PC-9 (cell line): ENCODE measurements at regions of chr3 and their contacts with region 1.

Region 1: DNA sequence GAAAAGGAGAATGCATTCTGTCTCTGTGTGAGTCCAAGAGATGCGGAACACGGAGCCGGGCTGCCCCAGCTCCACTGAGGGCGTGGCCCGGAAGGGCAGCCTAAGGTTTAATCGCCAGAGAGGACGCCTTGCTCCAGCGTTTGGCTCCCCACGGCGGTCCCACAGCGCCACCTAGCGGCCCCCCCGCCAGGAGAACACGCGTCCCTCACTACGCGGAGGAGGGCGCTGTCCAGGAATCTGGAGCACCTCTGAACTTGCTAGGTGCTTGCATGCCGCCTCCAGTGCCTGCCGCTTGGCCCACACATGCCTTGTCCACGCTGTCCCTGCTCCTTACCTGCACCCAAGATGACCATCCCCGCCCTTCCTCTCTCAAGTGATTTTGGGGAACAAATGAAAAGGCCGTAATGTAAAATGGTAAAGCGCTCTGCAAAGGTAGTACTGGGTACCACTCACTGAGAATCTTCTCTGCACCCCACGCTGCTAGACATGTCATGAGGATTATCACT is 14.4 kb upstream of the MRPS22 start:
- DNase-seq: peak; percentile 72 to 94
- H3K4me3 ChIP-seq: no peak overlapping the region
- H3K27ac ChIP-seq: no peak overlapping the region
- H3K4me1 ChIP-seq: 0 out of 2 replicates have a peak, but pooled peaks cover 3% of the 10 kb centered on the region
- H3K27me3 ChIP-seq: peaks cover 10% of the 10 kb centered on the region
- CTCF ChIP-seq: peak; percentile 97

Region 2: DNA sequence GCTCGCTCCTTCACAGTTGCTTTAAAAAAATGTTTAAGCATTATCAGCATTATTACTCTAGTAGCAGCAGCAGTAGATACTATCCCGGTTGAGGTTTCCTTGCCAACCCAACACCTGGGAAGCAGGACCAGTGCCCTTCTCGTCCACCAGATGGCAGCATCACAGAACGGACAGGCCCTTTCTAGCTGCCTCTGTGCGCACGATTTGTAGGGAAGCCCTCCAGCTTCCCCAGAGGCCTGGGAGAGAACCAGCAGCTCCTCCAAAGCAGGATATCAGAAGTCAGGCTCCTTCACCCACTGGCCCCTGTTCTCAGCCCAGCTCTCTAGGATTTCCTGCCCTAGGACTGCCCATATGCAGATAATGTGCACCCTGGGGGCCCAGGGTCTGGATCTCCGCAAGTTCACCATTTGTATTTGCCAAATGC is 911.8 kb before region 1 on chr3:
- CTCF ChIA-PET with region 1: interaction called, 3 read pairs
- POLR2A ChIA-PET with region 1: no interaction called
- intact Hi-C with region 1: loop called (anchors 1 kb)
- DNase-seq: peak; percentile 54 to 83
- H3K4me3 ChIP-seq: no peak overlapping the region
- H3K27ac ChIP-seq: no peak overlapping the region
- H3K4me1 ChIP-seq: no peaks in the 10 kb centered on the region
- H3K27me3 ChIP-seq: no peaks in the 10 kb centered on the region
- CTCF ChIP-seq: peak; percentile 88

Region 3: DNA sequence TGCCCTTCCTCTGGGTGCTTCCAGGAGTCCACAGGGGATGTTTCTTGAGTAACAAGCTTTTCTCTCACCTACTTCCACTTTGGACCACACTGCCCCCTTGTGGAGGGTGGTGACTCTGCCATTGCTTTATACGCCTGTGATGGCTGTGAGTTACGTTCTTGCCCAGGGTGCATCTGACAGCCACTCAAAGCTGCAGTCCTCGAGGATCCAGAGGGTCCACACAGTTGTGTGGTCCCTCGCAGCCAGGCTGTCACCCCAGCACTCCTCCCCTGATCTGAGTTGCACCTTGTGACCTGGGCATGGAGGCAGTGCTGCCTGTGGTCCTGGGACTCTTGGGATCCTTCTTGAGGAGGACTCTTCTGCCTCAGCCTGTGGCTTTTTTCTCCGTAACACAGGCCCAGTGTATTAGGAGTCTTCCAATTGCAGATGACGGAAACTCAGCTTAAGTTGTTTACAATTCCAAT is 405.8 kb before region 1 on chr3:
- CTCF ChIA-PET with region 1: no interaction called
- POLR2A ChIA-PET with region 1: no interaction called
- intact Hi-C with region 1: loop called (anchors 1 kb)
- DNase-seq: peak; percentile 67 to 85
- H3K4me3 ChIP-seq: no peak overlapping the region
- H3K27ac ChIP-seq: no peak overlapping the region
- H3K4me1 ChIP-seq: peaks cover 30% of the 10 kb centered on the region
- H3K27me3 ChIP-seq: no peaks in the 10 kb centered on the region
- CTCF ChIP-seq: peak; percentile 92

Region 4: DNA sequence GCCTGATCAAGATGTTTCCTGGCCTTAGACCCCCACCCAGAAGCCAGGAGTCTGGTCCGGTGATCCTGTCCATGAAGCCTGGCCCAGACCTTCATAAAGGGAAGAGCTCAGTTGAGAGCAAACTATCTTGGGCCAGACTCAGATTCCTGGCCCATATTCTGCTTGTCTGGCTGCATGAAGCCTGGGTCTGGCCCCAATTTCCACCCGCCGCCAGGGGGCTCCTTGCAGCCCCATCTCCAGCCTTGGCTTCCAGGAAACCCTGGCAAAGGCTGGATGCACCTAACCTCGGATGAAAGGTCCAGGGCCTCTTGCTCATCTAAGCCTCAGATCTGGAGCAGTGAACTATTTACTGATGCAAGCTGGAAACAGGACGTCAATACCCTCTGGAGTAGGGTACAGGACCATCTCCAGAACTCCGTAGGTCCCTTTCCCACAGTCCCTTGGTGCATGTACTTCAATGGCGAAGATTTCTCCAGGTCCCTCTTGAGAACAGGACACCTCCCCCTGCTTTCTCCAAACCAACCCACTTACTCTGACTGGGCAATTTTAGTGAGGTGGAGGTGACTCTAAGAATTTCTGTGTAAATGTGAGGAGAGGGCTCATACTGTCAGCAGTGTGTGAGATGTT is 388.0 kb before region 1 on chr3:
- CTCF ChIA-PET with region 1: no interaction called
- POLR2A ChIA-PET with region 1: no interaction called
- intact Hi-C with region 1: loop called (anchors 1 kb)
- DNase-seq: peak; percentile 40 to 55
- H3K4me3 ChIP-seq: no peak overlapping the region
- H3K27ac ChIP-seq: no peak overlapping the region
- H3K4me1 ChIP-seq: no peaks in the 10 kb centered on the region
- H3K27me3 ChIP-seq: no peaks in the 10 kb centered on the region
- CTCF ChIP-seq: peak; percentile 68

Region 5: GRCh38 chr3:139202226-139202958 is 127.0 kb before region 1 on chr3:
- CTCF ChIA-PET with region 1: no interaction called
- POLR2A ChIA-PET with region 1: no interaction called
- intact Hi-C with region 1: loop called (anchors 1 kb)
- DNase-seq: peak; percentile 59 to 72
- H3K4me3 ChIP-seq: no peak overlapping the region
- H3K27ac ChIP-seq: no peak overlapping the region
- H3K4me1 ChIP-seq: no peaks in the 10 kb centered on the region
- H3K27me3 ChIP-seq: no peaks in the 10 kb centered on the region
- CTCF ChIP-seq: no peak

Region 6: DNA sequence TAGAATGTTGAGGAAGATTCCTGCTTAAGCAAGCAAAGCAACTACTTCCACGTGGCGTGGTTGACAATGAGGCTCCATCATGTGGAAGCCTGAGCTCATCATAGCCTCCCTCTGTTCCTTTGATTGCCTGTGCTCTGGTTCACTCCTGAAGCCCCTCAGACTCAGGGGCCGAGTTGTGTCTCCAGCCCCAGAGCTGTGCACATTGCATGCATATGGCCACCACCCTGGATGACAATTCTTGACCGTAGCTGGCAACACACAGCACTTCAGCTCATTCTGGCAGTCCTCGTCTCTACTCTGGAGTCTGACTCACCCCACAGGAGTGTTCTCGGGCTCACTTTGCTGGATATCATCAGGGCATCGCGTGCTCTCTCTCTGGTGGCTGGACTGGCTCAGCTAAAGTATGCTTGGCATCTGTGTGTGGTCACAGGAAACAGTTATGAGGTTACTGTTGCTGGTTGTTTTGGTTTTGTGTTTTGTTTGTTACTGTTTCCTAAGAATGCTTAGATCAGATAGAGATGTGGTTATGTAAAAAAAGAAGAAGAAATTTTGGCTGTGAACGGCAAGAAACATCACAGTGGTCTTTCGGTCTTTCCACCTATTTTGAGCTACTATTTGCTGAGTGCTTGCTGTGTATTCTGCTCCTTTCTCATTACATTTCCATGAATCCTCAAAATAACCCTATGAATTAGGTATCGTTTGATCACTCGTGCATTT is 27.2 kb before region 1 on chr3:
- CTCF ChIA-PET with region 1: no interaction called
- POLR2A ChIA-PET with region 1: no interaction called
- intact Hi-C with region 1: loop called (anchors 1 kb)
- DNase-seq: peak; percentile 91 to 97
- H3K4me3 ChIP-seq: peak overlapping the region; percentile 22; the same call in 1 of the 2 replicates
- H3K27ac ChIP-seq: peak overlapping the region; percentile 71
- H3K4me1 ChIP-seq: peaks cover 52% of the 10 kb centered on the region
- H3K27me3 ChIP-seq: no peaks in the 10 kb centered on the region
- CTCF ChIP-seq: no peak

Region 7: DNA sequence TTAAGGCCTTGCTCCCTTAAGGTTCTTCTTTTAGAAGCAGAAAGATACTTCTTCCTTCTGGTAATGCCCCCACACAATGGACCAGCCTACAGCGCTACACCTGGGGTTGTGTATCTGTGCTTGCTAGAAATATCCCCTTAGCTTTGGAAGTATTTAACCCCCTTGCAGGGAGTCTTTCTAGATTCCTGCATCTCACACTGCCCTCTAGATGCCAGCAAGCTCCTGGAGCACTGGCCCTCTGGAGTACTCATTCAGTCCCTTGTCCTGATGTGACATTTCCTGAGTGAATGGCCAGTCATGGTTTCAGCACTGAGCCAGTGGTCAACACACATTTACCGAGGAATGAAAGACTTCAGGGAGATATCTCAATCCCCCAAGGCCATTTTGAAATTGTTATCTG is 177.4 kb after region 1 on chr3:
- CTCF ChIA-PET with region 1: no interaction called
- POLR2A ChIA-PET with region 1: no interaction called
- intact Hi-C with region 1: no loop called
- DNase-seq: no peak
- H3K4me3 ChIP-seq: no peak overlapping the region
- H3K27ac ChIP-seq: no peak overlapping the region
- H3K4me1 ChIP-seq: no peaks in the 10 kb centered on the region
- H3K27me3 ChIP-seq: no peaks in the 10 kb centered on the region
- CTCF ChIP-seq: no peak

Region 8: DNA sequence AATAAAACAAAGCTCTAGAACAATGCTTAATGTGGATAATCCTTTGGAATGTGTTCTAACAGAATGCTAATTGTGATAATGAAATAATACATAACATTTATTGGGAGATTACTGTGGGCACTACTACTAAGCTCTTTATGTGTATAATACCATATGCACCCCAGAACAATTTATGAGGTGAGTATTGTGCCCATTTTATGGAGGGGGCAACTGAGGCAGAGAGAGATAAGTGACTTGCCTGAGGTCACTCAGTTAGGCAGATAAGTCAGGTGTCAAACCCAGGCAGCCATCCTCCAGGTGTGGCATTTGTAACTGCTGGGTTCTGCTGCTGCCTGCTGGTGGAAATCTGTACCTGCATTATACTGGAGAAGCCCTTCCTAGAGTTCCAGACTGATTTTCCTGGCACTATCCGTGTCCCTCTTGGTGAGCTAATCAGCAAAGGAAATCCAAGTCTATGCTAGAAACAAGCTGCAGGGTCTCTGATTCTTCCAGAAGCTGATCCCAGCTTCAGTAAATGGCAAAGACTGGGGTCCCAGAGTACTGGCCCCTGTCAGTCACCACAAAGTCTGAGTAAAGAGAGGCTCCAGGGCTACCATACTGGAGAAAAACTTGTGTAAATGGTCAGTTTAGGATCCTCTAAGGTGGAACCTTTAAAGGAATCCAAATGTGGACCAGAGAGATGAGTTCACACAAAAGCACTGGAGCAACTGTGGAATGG is 232.7 kb after region 1 on chr3:
- CTCF ChIA-PET with region 1: no interaction called
- POLR2A ChIA-PET with region 1: no interaction called
- intact Hi-C with region 1: no loop called
- DNase-seq: peak; percentile 47 to 55
- H3K4me3 ChIP-seq: no peak overlapping the region
- H3K27ac ChIP-seq: no peak overlapping the region
- H3K4me1 ChIP-seq: peaks cover 33% of the 10 kb centered on the region
- H3K27me3 ChIP-seq: no peaks in the 10 kb centered on the region
- CTCF ChIP-seq: peak; percentile 83